Prostate gland (tissue), 2 donors: ENCODE measurements at regions of chr19 and their contacts with region 1.

Region 1: DNA sequence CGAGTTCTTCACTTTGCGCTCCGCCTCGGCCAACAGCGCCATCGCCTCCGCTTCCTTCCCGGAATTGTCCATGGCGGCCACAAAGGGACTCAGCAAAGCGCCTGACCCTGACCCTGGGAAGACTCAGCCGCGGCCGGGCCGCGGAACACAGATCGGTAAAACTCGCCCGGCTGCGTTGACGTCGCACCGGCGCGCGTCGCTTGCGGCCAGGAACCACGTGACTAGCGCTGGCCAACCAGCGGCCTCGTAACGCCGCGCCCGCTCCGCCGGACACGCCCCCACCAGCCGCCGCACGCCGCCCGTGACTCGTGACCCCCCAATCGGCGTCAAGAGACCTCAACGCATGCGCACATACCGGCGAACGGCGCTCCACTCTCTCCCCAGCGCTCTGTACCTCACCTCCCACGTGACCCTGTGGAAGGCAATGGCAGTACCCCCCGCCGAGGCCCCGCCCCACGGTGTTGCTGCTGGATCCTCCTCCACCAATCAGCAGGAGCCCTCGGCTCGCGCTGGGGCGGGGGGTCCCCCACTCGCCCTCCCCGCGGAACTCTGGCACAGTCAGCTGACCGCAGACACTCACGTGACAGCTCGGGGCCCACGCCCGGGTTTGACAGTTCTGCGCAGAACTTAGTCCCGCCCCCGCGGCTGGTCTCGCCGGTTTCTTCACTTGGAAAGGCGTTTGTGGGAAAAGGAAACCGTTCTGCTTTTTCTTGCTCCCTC is at the start of gene NAPA:
- DNase-seq: peak; percentile 100
- H3K4me3 ChIP-seq: peak within 1 kb of the TSS; percentile 78 to 97
- H3K27ac ChIP-seq: peak within 1 kb of the TSS; percentile 97 to 98
- H3K4me1 ChIP-seq: peaks cover 23% of the 10 kb centered on the region
- H3K27me3 ChIP-seq: no peaks in the 10 kb centered on the region
- CTCF ChIP-seq: peak in 1 of 4 experiments; percentile 20
- POLR2A ChIP-seq: peak; percentile 98
- total RNA-seq, gene NAPA: 263 to 422 TPM

Region 2: DNA sequence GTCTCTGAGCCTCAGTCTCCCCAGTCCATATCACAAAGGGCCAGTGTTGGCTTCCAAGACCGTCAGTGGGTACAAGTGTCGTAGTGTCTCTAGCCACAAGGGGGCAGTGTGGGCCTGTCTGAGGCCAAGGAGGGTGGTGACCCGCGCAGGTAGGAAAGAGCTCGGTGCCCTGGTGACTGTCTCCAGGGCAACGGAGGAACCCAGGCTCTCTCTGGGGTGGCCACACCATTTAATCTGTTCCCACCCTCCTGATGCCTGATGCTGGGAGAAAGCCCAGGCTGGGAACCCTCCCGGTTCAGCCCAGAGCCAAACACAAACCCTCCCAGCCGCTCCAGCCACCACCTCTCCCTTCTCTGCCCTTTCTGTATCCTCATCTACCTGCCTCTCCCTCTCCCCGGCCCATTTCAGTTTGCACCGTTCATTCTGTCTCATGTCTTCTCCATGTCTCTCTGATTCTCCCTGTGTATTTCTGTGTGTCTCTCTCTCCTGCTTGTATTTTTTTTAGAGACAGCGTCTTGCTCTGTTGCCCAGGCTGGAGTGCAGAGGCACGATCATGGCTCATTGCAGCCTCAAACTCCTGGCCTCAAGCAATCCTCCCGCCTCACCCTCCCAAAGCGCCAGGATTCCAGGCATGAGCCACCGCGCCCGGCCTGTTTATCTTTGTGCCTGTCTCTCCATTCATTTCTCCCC is 78.2 kb before region 1 on chr19:
- intact Hi-C with region 1: loop called (anchors 5 kb)
- DNase-seq: peak; percentile 77
- H3K4me3 ChIP-seq: no peak overlapping the region
- H3K27ac ChIP-seq: no peak overlapping the region
- H3K4me1 ChIP-seq: no peaks in the 10 kb centered on the region
- H3K27me3 ChIP-seq: no peaks in the 10 kb centered on the region
- CTCF ChIP-seq: peak; percentile 80 to 97 (median 92)
- POLR2A ChIP-seq: no peak

Region 3: GRCh38 chr19:47573071-47574026 is 58.3 kb after region 1 on chr19 and contains the start of gene ZNF541:
- intact Hi-C with region 1: no loop called
- DNase-seq: peak; percentile 9
- H3K4me3 ChIP-seq: peak within 1 kb of the TSS; percentile 17 to 18
- H3K27ac ChIP-seq: no peak within 1 kb of the TSS
- H3K4me1 ChIP-seq: no peaks in the 10 kb centered on the region
- H3K27me3 ChIP-seq: no peaks in the 10 kb centered on the region
- CTCF ChIP-seq: no peak
- POLR2A ChIP-seq: no peak
- total RNA-seq, gene ZNF541: 0.23 to 13.9 TPM